MCF 10A (cell line): ENCODE measurements at regions of chr3 and their contacts with region 1.

Region 1: DNA sequence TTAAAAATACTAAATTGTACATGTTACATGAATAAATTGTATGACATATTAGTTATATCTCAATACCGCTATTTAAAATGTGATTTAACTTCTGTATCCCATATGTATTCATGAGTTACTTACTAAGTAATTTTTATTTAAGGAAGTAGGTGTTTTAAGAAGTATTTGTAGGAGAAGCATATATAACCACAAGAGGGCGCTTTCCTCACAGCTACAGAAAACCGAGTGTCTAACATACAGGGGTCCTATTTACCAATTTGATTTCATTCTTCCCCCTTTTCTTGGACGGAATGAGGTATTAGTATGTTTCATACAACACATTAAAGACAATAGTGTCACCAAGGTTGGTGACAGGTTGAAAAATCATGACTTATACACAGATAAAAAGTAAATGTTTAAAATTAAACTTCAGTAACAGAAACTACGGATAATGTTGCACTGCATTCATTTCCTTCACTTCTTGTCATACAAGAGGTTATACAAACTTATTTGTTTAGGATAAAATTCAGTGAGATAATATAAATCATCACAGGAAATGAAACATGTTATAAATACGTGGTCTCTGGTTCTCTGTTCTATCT is 253.6 kb downstream of the MAGI1 start:
- DNase-seq: peak; percentile 48
- H3K4me3 Mint-ChIP-seq: no peak overlapping the region
- H3K27ac Mint-ChIP-seq: no peak overlapping the region
- H3K4me1 Mint-ChIP-seq: no peaks in the 10 kb centered on the region
- H3K27me3 Mint-ChIP-seq: no peaks in the 10 kb centered on the region
- CTCF ChIP-seq: peak; percentile 61

Region 2: GRCh38 chr3:65914740-65915367 is 129.7 kb after region 1 on chr3:
- CTCF ChIA-PET with region 1: interaction called, 8 read pairs
- POLR2A ChIA-PET with region 1: no interaction called
- intact Hi-C with region 1: loop called (anchors 1 kb)
- DNase-seq: peak; percentile 18
- H3K4me3 Mint-ChIP-seq: no peak overlapping the region
- H3K27ac Mint-ChIP-seq: no peak overlapping the region
- H3K4me1 Mint-ChIP-seq: no peaks in the 10 kb centered on the region
- H3K27me3 Mint-ChIP-seq: no peaks in the 10 kb centered on the region
- CTCF ChIP-seq: peak; percentile 31

Region 3: GRCh38 chr3:66195347-66195783 is 410.2 kb after region 1 on chr3:
- CTCF ChIA-PET with region 1: interaction called, 6 read pairs
- POLR2A ChIA-PET with region 1: no interaction called
- intact Hi-C with region 1: loop called (anchors 2 kb)
- DNase-seq: no peak
- H3K4me3 Mint-ChIP-seq: no peak overlapping the region
- H3K27ac Mint-ChIP-seq: no peak overlapping the region
- H3K4me1 Mint-ChIP-seq: no peaks in the 10 kb centered on the region
- H3K27me3 Mint-ChIP-seq: no peaks in the 10 kb centered on the region
- CTCF ChIP-seq: no peak